Right ventricle myocardium inferior (tissue), 1 donor: ENCODE measurements at regions of chr2 and their contacts with region 1.

Region 1: GRCh38 chr2:179677077-179677688 is 184.2 kb downstream of the ZNF385B start:
- DNase-seq: no peak
- ATAC-seq: peak; percentile 85

Region 2: GRCh38 chr2:179487010-179487731 is 190.0 kb before region 1 on chr2:
- intact Hi-C with region 1: loop called (anchors 1 kb)
- DNase-seq: no peak
- ATAC-seq: peak; percentile 92

Region 3: DNA sequence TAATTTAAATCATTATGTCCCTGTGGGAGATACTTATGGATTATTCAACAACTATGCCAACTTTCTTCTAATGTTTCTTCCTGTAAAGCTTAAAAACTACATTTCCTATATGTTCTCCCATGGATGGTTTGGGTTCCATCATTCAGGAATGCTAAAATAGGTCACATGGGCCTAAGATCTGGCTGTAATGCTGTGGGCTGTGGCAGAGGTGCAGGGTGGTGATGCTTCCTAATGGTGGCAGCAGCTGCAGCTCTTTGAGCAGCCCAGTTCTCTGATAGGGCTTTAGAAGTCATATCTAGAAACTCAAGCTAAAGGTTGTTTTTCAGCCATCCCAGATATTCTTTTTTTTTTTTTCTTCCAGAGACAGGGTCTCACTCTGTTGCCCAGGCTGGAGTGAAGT is 81.9 kb before region 1 on chr2:
- intact Hi-C with region 1: loop called (anchors 2 kb)
- DNase-seq: no peak
- ATAC-seq: no peak

Region 4: DNA sequence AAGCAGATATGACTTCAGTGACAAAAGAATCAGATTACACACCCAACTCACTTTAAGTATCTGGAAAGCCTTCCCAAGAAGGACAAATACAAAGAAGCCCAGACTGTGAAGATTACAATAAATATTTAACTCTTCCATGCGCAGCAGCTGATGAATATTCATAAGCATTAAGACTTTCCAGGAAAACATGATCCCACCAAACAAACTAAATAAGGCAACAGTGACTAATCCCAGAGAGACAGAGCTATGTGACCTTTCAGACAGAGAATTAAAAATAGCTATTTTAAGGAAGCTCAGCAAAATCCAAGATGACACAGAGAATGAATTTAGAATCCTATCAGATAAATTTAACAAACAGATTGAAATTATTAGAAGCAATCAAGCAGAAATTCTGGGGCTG is 1195.1 kb after region 1 on chr2:
- intact Hi-C with region 1: no loop called
- DNase-seq: no peak
- ATAC-seq: no peak